Esophagus squamous epithelium (tissue), 5 donors: ENCODE measurements at regions of chr7 and their contacts with region 1.

Region 1: DNA sequence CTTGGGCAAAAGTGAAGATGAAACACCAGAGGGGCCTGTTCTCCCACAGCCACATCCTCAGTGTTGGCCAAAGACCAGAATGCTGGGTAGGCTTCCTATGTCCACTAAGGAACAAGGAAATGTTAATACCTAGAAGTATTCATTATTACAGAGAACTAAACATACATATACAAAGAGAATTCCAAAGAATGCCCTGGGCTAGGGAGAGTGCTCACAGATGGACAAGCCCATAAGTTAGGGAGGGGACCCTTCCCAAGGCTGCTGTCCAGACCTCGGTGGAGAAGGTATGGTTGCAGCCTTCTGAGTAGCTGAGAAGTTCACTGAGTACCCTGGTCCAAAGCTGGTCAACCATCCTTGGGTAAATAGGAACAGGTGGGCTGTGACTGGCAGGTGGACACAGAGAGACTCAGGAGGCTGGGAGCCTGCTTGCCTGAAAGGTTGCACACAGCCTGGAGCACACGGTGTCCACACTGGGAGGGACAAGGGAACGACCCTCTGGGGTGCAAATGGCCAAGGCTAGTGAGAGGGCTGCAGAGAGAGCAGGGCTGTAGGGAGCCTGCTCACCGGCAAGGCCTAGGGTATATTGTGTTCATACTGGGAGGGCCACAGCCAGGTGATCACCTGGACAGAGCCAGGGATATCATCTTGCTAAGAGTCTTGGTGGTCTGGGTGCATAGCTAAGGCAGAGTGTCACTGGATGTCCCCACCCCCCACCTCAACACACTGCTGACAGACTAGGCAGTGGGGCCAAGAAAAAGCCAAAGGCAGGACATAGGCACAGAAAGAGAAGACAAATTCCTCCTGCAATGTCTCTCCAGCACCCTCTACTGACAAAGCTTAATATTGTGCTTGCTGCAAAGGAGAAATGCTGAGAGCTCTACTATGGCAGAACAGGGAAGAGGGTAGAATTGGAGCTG is 40.3 kb downstream of the CPVL start:
- DNase-seq: no peak
- H3K4me3 ChIP-seq: no peak overlapping the region
- H3K27ac ChIP-seq: no peak overlapping the region
- H3K4me1 ChIP-seq: peaks cover 0 to 39% (median 8%) of the 10 kb centered on the region in 3 donors
- H3K27me3 ChIP-seq: no peaks in the 10 kb centered on the region
- CTCF ChIP-seq: peak; percentile 37 to 86 (median 77)
- POLR2A ChIP-seq: no peak

Region 2: GRCh38 chr7:28926871-28927597 is 179.0 kb before region 1 on chr7:
- intact Hi-C with region 1: loop called (anchors 5 kb)
- DNase-seq: peak; percentile 14
- H3K4me3 ChIP-seq: peak overlapping the region; percentile 24 to 66 (median 50)
- H3K27ac ChIP-seq: peak overlapping the region in 3 of 4 donors; percentile 35 to 63 (median 57)
- H3K4me1 ChIP-seq: peaks cover 3 to 21% (median 12%) of the 10 kb centered on the region in 3 donors
- H3K27me3 ChIP-seq: peaks cover 0 to 6% (median 0%) of the 10 kb centered on the region in 4 donors
- CTCF ChIP-seq: peak; percentile 78 to 88 (median 85)
- POLR2A ChIP-seq: no peak

Region 3: GRCh38 chr7:28955718-28956619 is 150.0 kb before region 1 on chr7:
- intact Hi-C with region 1: loop called (anchors 10 kb)
- DNase-seq: no peak
- H3K4me3 ChIP-seq: peak overlapping the region; percentile 47 to 73 (median 61)
- H3K27ac ChIP-seq: peak overlapping the region; percentile 84 to 91 (median 88)
- H3K4me1 ChIP-seq: peaks cover 24 to 74% (median 40%) of the 10 kb centered on the region in 3 donors
- H3K27me3 ChIP-seq: peaks cover 0 to 42% (median 0%) of the 10 kb centered on the region in 4 donors
- CTCF ChIP-seq: peak; percentile 31 to 89 (median 80)
- POLR2A ChIP-seq: no peak